ENCODE measurements at regions of chr4 and their contacts with region 1.

Region 1: DNA sequence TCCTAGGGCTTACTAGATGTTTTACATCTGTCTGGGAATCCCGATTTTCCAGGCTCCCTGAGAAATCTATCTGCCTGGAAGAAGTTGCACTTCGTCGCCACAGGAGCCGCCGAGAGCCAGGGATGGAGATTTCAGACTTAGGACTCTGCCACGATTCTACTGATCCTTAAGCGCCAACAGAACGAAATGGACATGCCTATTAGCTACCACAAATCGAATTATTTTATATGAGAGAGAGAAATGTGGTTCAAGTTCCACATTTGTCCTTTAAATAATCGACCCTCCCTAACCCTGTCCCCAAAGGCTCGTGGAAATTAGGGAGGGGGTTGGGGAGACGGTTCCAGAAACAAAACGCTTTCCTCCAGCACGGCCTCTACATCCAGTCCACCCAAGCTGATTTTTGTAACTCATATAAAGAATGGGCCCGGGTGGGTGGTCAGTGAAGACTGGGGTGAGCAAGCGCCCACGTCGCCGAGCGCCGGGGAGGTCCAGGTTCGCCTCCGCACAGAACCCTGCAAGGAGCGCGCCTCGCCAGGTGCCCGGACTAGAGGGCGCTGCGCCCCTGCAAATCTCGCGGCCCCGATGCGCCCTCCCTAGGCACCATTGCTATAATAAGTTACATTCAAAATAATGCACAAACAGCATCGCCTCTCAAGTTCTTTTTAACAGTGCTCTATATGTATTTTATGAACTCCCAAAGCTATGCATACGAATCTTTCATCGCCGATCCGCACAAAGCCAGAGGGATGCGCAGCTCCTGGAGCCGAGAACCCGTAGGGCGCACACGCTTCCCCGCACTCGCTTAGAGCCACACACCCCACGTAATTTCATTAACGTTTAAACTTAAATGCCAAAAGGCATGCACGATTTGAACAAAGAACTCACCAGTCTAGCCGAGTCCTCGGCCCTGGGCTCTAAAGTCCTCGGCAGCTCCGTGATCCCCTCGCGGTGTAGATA is 2.1 kb upstream of the FAT1 start:
- DNase-seq: peak; percentile 85
- ATAC-seq: peak; percentile 81

Region 2: DNA sequence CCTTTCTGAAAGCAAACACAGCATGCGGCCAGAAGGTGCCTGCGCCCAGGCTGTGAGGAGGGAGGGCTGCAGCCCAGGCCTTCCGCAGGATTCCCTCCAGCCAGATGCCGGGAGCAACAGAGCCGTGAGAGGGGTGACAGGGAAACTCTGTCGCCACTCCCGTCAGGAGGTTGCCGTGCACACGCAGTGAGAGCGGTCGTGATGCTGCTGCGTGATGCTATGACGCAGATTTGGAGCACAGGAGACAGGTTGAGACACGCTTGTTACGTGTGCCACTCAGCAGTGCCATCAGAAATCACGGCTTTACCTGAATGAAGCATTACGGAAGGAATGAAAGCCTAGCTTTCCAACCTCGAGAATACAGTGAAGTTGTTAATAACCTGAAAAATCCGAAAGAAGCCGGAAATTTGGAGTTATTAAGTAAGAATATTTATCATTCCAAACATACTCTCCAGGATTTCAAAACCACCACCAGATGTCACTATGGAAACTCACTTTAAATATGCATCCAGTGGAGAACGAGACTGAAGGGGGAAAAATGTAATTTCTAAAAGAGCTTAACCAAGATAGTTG is 56.5 kb before region 1 on chr4:
- intact Hi-C with region 1: loop called (anchors 2 kb)
- DNase-seq: no peak
- ATAC-seq: peak; percentile 75

Region 3: DNA sequence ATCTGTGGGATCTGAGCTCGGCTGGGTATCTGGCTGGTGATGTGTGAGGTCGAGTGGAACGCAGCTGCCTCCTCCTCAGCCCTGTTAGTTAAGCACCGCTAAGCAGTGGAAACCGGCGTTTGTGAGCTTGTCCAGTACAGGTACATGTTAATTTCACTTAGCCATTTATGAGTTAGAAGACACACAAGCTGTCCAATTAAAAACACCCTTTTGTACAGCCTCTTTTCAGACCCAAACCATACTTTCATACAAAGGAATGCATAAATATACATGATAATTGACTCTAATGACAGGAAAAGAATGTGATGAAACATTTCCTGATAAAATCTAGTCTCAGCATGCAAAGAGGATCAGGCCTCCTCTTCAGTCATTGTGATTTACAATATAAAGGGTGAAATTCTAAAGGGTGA is 161.5 kb after region 1 on chr4:
- intact Hi-C with region 1: no loop called
- DNase-seq: no peak
- ATAC-seq: no peak

Measured in left ventricle myocardium superior (tissue), 1 donor.